IMR-90 (cell line): ENCODE measurements at regions of chr4 and their contacts with region 1.

Region 1: GRCh38 chr4:72896515-72896914 is 173.0 kb downstream of the COX18 start:
- DNase-seq: peak; percentile 78
- ATAC-seq: peak; percentile 84
- H3K4me3 ChIP-seq: no peak overlapping the region
- H3K27ac ChIP-seq: no peak overlapping the region
- H3K4me1 ChIP-seq: no peaks in the 10 kb centered on the region
- H3K27me3 ChIP-seq: no peaks in the 10 kb centered on the region
- CTCF ChIP-seq: no peak
- POLR2A ChIP-seq: no peak
- RAD21 ChIP-seq: no peak

Region 2: DNA sequence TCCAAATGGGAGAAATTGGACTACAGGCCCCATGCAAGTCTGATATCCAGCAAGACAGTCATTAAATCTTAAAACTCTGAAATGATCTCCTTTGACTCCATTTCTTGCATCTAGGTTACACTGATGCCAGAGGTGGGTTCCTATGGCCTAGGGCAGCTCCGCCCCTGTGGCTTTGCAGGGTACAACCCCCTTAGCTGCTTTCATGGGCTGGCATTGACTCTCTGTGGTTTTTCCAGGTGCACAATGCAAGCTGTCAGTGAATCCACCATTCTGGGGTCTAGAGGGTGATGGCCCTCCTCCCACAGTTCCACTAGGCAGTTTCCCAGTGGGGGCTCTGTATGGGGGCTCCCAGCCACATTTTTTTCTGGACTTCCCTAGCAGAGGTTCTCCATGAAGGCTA is 99.0 kb before region 1 on chr4:
- CTCF ChIA-PET with region 1: no interaction called
- POLR2A ChIA-PET with region 1: no interaction called
- dilution Hi-C with region 1: no loop called
- in situ Hi-C with region 1: no loop called
- intact Hi-C with region 1: no loop called
- DNase-seq: no peak
- ATAC-seq: no peak
- H3K4me3 ChIP-seq: no peak overlapping the region
- H3K27ac ChIP-seq: no peak overlapping the region
- H3K4me1 ChIP-seq: no peaks in the 10 kb centered on the region
- H3K27me3 ChIP-seq: no peaks in the 10 kb centered on the region
- CTCF ChIP-seq: no peak
- POLR2A ChIP-seq: no peak
- RAD21 ChIP-seq: no peak

Region 3: DNA sequence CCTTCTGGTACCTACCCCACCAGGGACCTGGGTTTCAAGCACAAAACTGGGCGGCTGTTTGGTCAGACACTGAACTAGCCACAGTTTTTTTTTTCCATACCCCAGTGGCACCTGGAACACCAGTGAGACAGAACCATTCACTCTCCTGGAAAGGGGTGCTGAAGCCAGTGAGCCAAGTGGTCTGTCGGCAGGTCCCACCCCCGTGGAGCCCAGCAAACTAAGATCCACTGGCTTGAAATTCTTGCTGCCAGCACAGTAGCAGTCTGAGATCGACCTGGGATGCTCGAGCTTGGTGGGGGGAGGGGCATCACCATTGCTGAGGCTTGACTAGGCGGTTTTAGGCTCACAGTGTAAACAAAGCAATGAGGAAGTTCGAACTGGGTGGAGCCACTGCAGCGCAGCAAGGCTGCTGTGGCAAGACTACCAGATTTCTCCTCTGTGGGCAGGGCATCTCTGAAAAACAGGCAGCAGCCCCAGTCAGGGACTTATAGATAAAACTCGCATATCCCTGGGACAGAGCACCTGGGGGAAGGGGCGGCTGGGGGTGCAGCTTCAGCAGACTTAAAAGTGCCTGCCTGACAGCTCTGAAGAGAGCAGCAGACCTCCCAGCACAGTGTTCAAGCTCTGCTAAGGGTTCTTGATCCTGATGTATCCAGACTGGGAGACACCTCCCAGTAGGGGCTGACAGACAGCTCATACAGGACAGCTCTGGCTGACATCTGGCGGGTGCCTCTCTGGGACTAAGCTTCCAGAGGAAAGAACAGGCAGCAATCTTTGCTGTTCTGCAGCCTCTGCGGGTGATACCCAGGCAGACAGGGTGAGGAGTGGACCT is 50.0 kb before region 1 on chr4:
- CTCF ChIA-PET with region 1: no interaction called
- POLR2A ChIA-PET with region 1: no interaction called
- dilution Hi-C with region 1: no loop called
- in situ Hi-C with region 1: no loop called
- intact Hi-C with region 1: no loop called
- DNase-seq: no peak
- ATAC-seq: peak; percentile 40; the same call in 1 of the 2 replicates
- H3K4me3 ChIP-seq: no peak overlapping the region
- H3K27ac ChIP-seq: no peak overlapping the region
- H3K4me1 ChIP-seq: no peaks in the 10 kb centered on the region
- H3K27me3 ChIP-seq: no peaks in the 10 kb centered on the region
- CTCF ChIP-seq: no peak
- POLR2A ChIP-seq: no peak
- RAD21 ChIP-seq: no peak

Region 4: DNA sequence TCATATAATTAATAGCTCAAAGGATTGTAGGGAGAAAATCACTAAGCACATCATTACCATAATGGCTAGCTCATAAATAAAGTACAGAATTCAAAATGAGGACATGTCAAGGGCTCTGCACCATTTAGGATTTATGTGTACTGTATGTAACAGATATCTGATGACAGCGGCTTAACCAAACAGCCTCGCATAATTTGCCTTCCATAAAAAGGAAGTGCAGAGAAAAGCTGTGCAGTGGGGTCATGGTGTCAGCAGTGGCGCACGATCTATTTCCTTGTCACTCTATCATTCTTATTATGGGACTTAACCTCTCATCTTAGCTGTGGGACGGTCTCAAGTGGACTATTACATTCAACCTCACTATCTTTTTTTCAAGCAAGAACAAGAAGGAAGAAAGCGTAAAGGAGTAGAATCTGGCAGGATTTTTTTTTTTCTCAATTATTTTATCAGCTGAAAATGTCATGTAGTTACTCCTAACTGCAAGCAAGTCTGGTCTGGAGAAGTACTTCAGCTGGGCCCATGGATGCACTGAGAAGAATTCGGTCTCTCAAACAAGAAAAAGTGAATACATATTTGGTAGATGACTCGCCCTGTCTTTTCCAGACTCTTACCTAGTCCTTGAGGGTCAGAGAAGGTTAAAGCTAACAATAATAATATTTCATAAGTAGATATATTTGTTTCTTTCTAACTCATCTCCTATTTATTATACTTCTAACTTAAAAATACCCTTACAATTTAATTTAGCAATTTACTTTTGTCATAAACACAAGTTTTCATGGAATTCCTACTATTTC is 78.4 kb after region 1 on chr4:
- CTCF ChIA-PET with region 1: no interaction called
- POLR2A ChIA-PET with region 1: no interaction called
- dilution Hi-C with region 1: no loop called
- in situ Hi-C with region 1: no loop called
- intact Hi-C with region 1: loop called (anchors 5 kb)
- DNase-seq: peak; percentile 56
- ATAC-seq: peak; percentile 77
- H3K4me3 ChIP-seq: no peak overlapping the region
- H3K27ac ChIP-seq: peak overlapping the region; percentile 77; the same call in 1 of the 2 replicates
- H3K4me1 ChIP-seq: peaks cover 4% of the 10 kb centered on the region
- H3K27me3 ChIP-seq: no peaks in the 10 kb centered on the region
- CTCF ChIP-seq: no peak
- POLR2A ChIP-seq: no peak
- RAD21 ChIP-seq: no peak